Prostate gland (tissue), 2 donors: ENCODE measurements at regions of chr15 and their contacts with region 1.

Region 1: GRCh38 chr15:94119923-94120775 is 111.2 kb upstream of the MCTP2 start:
- DNase-seq: peak; percentile 78
- H3K4me3 ChIP-seq: no peak overlapping the region
- H3K27ac ChIP-seq: peak overlapping the region; percentile 57 to 62
- H3K4me1 ChIP-seq: no peaks in the 10 kb centered on the region
- H3K27me3 ChIP-seq: no peaks in the 10 kb centered on the region
- CTCF ChIP-seq: peak; percentile 88 to 99 (median 96)
- POLR2A ChIP-seq: no peak

Region 2: GRCh38 chr15:92797168-92797951 is 1322.8 kb before region 1 on chr15:
- intact Hi-C with region 1: loop called (anchors 10 kb)
- DNase-seq: peak; percentile 81
- H3K4me3 ChIP-seq: no peak overlapping the region
- H3K27ac ChIP-seq: peak overlapping the region; percentile 62 to 77
- H3K4me1 ChIP-seq: no peaks in the 10 kb centered on the region
- H3K27me3 ChIP-seq: no peaks in the 10 kb centered on the region
- CTCF ChIP-seq: peak; percentile 91 to 92 (median 92)
- POLR2A ChIP-seq: no peak

Region 3: GRCh38 chr15:93030430-93031105 is 1089.6 kb before region 1 on chr15:
- intact Hi-C with region 1: loop called (anchors 2 kb)
- DNase-seq: peak; percentile 77
- H3K4me3 ChIP-seq: no peak overlapping the region
- H3K27ac ChIP-seq: peak overlapping the region; percentile 8 to 59
- H3K4me1 ChIP-seq: peaks cover 31% of the 10 kb centered on the region
- H3K27me3 ChIP-seq: no peaks in the 10 kb centered on the region
- CTCF ChIP-seq: peak; percentile 72 to 89 (median 86)
- POLR2A ChIP-seq: no peak

Region 4: DNA sequence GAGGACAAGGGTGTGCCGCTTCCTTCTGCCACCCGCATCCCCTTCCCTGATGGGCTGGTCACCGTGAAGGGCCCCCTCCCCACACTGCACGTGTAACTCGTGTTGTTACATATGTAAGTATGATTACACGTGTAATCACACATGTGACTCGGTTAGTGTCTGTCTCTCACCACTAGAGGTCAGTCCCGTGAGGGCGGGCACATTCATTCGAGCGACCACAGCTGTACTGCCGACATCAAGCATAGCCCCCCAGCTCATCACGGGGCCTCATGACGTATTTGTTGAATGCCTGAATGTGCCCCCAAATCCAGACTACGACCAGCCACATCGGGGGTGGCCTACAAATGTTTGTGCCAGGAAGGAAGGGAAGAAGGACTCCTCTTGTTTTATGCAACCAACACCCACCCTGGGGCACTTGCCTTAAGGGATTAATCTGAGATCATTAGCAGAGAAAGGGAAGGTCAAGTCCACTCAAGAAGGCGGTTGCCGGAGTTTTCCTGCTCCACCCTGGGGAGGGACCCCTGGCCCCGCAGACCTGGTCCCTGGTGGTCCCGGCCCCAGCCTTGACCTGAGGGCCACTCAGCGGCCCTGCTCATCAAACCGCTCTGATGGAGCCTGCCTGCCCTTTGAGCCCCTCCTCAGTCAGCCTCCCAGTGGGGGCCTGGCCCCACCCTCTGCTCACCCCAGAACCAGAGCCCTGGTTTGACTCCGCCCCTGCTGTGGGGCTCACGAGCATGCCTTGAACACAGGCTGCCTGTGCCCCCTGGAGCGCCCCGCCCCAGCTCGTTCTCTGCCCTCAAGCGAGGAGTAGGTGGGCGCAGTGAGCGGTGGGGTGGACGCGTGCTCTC is 1084.0 kb before region 1 on chr15:
- intact Hi-C with region 1: loop called (anchors 2 kb)
- DNase-seq: no peak
- H3K4me3 ChIP-seq: no peak overlapping the region
- H3K27ac ChIP-seq: no peak overlapping the region
- H3K4me1 ChIP-seq: no peaks in the 10 kb centered on the region
- H3K27me3 ChIP-seq: no peaks in the 10 kb centered on the region
- CTCF ChIP-seq: peak; percentile 9 to 73 (median 45)
- POLR2A ChIP-seq: no peak

Region 5: DNA sequence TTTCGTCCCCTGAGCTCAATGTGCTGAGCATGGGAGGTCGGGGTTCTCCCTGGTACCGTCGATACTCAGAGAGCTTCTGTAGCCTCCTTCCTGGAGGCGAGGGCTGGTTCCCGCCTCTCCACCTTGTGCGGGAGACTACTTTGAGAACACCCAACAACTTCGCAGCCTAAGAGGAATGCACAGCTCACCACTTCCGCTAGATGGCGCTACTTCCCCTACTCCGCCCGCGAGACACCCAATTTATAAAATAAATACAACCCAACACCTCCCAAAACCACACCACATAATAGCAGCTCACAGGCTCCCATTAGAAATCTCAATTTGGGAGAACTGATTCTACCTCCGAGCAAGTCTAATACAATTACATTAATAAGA is 1032.3 kb before region 1 on chr15:
- intact Hi-C with region 1: loop called (anchors 5 kb)
- DNase-seq: peak; percentile 67
- H3K4me3 ChIP-seq: peak overlapping the region; percentile 40 to 50
- H3K27ac ChIP-seq: peak overlapping the region in 1 of 2 donors; percentile 53
- H3K4me1 ChIP-seq: no peaks in the 10 kb centered on the region
- H3K27me3 ChIP-seq: no peaks in the 10 kb centered on the region
- CTCF ChIP-seq: peak; percentile 86 to 95 (median 88)
- POLR2A ChIP-seq: no peak

Region 6: DNA sequence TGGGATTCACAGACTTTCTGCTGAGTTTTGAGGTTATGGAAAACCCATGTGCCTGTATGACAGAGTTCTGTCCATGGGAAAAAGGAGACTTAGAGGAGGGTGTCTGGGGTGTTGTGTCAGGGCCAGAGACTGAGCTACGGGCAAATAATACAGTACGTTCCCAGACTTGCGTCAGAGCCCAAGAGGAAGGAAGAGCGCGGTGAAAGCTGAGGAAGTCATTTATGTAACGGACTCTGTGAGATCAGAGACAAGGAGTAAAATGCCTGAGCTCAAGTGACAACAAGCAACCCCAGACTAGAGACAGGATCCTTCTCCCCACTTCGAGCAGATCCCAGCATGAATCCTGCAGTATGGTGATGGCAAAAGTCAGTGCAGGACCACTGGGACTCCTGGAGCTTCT is 257.4 kb before region 1 on chr15:
- intact Hi-C with region 1: no loop called
- DNase-seq: no peak
- H3K4me3 ChIP-seq: no peak overlapping the region
- H3K27ac ChIP-seq: no peak overlapping the region
- H3K4me1 ChIP-seq: no peaks in the 10 kb centered on the region
- H3K27me3 ChIP-seq: no peaks in the 10 kb centered on the region
- CTCF ChIP-seq: no peak
- POLR2A ChIP-seq: no peak

Region 7: DNA sequence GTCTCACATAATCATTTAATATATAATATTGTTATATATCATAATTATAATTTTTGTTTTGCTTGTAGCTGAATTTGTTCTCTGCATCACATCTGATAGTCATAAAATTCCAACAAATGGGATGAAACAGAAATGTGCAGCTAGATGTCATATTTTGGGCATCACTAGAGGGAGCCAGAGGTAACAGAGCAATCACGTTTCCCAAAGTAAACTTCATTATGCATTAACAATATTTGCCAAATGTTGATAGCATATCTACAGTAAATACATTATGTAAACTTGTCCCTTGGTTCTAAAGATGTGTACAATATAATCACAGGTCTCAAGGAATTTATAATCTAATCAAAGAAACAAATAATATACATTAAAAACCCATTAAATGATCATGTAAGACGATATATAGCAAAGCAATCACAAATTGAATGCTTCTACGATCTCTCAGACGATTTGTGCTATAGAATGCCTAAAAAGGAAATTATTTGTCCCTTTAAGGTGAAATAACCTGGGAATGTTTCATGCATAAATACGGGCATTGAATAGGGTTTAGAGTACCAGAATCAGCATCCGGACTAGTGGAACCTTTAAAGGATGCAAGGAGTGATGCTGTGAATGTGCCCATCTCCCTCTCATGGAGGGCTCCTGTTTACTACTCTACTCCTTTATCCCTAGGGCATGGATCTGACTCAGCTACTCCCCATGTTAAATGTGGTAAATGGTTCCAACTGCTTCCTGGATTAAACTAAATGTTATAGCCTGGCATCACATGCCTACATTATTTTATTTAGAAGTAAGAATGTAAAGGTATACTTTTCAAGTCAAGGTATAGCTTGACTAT is 122.8 kb before region 1 on chr15:
- intact Hi-C with region 1: loop called (anchors 5 kb)
- DNase-seq: no peak
- H3K4me3 ChIP-seq: no peak overlapping the region
- H3K27ac ChIP-seq: no peak overlapping the region
- H3K4me1 ChIP-seq: no peaks in the 10 kb centered on the region
- H3K27me3 ChIP-seq: no peaks in the 10 kb centered on the region
- CTCF ChIP-seq: peak; percentile 36 to 74 (median 66)
- POLR2A ChIP-seq: no peak